Stomach (tissue), 19 donors: ENCODE measurements at regions of chr4 and their contacts with region 1.

Region 1: DNA sequence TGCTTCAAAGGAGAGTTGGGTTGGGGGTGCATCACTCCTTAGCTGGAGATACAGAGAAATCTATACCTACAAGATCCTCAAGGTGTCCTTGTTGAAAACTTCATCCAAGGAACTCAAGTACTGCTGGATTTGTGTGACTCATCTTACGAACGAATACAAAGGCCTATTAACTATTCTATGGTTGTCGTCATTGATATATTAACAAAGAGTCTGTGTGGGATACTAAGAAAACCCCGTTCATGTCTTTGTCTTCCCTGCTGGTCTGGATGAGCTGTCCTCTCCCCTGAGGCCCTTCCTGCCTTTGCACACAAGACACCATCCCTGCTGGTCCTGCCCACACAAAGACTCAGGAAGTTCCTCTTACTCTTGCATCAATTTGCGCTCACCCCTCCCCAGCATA is 54.9 kb upstream of the IRF2 start:
- DNase-seq: no peak
- H3K4me3 ChIP-seq: no peak overlapping the region
- H3K27ac ChIP-seq: no peak overlapping the region
- H3K4me1 ChIP-seq: peaks cover 0 to 17% (median 7%) of the 10 kb centered on the region in 4 donors
- H3K27me3 ChIP-seq: no peaks in the 10 kb centered on the region
- CTCF ChIP-seq: no peak
- EP300 ChIP-seq: no peak
- POLR2A ChIP-seq: no peak

Region 2: GRCh38 chr4:184453365-184454160 is 75.7 kb before region 1 on chr4:
- intact Hi-C with region 1: no loop called
- DNase-seq: peak; percentile 49 to 81
- H3K4me3 ChIP-seq: peak overlapping the region in 1 of 4 donors; percentile 7
- H3K27ac ChIP-seq: peak overlapping the region; percentile 28 to 80 (median 69)
- H3K4me1 ChIP-seq: peaks cover 58 to 93% (median 79%) of the 10 kb centered on the region in 4 donors
- H3K27me3 ChIP-seq: no peaks in the 10 kb centered on the region
- CTCF ChIP-seq: no peak
- EP300 ChIP-seq: no peak
- POLR2A ChIP-seq: no peak

Region 3: GRCh38 chr4:184481544-184481943 is 47.7 kb before region 1 on chr4:
- intact Hi-C with region 1: loop called (anchors 5 kb)
- DNase-seq: no peak
- H3K4me3 ChIP-seq: no peak overlapping the region
- H3K27ac ChIP-seq: no peak overlapping the region
- H3K4me1 ChIP-seq: peaks cover 6 to 28% (median 11%) of the 10 kb centered on the region in 4 donors
- H3K27me3 ChIP-seq: no peaks in the 10 kb centered on the region
- CTCF ChIP-seq: no peak
- EP300 ChIP-seq: no peak
- POLR2A ChIP-seq: no peak

Region 4: DNA sequence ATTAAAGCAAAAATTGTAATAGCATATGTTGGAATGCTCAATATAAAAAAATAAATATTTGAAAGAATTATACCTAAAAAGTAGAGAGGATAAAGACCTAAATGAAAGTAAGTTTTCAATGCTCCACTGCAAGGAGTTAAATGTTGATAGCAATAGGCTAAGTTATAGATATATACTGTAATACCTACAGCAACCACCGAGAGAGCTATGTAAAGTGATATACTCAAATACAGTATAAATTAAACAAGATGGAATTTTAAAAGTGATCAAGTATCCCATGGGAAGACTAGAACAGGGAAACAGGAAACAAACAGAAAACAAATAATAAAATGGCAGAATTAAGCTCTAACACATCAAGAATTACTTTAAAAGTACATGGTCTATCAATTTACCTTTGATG is 46.0 kb after region 1 on chr4:
- intact Hi-C with region 1: no loop called
- DNase-seq: no peak
- H3K4me3 ChIP-seq: no peak overlapping the region
- H3K27ac ChIP-seq: no peak overlapping the region
- H3K4me1 ChIP-seq: no peaks in the 10 kb centered on the region
- H3K27me3 ChIP-seq: no peaks in the 10 kb centered on the region
- CTCF ChIP-seq: no peak
- EP300 ChIP-seq: no peak
- POLR2A ChIP-seq: no peak